ENCODE measurements at regions of chr5 and their contacts with region 1.

Region 1: GRCh38 chr5:148179234-148179824 is 11.0 kb downstream of the SPINK14 start:
- DNase-seq: peak; percentile 18
- H3K4me3 ChIP-seq: no peak overlapping the region
- H3K27ac ChIP-seq: no peak overlapping the region
- H3K4me1 ChIP-seq: no peaks in the 10 kb centered on the region
- H3K27me3 ChIP-seq: no peaks in the 10 kb centered on the region
- CTCF ChIP-seq: peak; percentile 50

Region 2: GRCh38 chr5:148374692-148375360 is 195.5 kb after region 1 on chr5:
- intact Hi-C with region 1: loop called (anchors 10 kb)
- DNase-seq: peak; percentile 52
- H3K4me3 ChIP-seq: no peak overlapping the region
- H3K27ac ChIP-seq: no peak overlapping the region
- H3K4me1 ChIP-seq: no peaks in the 10 kb centered on the region
- H3K27me3 ChIP-seq: no peaks in the 10 kb centered on the region
- CTCF ChIP-seq: peak; percentile 75

Region 3: DNA sequence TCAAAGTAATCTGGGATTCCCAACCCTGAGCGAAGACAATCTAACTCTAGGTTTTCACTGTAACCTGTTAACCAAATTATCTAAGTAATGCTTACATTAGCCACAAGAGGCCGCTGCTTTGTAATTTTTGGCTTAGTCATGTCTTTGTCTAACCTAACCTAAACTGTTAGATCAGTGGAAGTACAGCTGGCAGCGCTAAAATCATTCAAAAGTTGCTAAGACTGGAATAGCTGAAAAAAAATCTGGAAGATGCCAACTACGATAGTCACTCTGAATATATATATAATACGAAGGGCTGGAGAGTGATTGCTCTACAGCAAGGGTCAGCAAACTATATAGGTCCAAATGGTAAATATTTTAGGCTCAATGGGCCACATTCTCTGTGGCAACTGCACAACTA is 264.7 kb after region 1 on chr5:
- intact Hi-C with region 1: loop called (anchors 10 kb)
- DNase-seq: peak; percentile 74
- H3K4me3 ChIP-seq: no peak overlapping the region
- H3K27ac ChIP-seq: no peak overlapping the region
- H3K4me1 ChIP-seq: peaks cover 4% of the 10 kb centered on the region
- H3K27me3 ChIP-seq: no peaks in the 10 kb centered on the region
- CTCF ChIP-seq: peak; percentile 52

Measured in colonic mucosa (tissue), 4 donors.